ENCODE measurements at regions of chr7 and their contacts with region 1.

Region 1: GRCh38 chr7:101542527-101543241 is 86.4 kb downstream of the MYL10 start:
- DNase-seq: peak; percentile 83 to 90
- H3K4me3 ChIP-seq: no peak overlapping the region
- H3K4me3 Mint-ChIP-seq: no peak overlapping the region
- H3K27ac Mint-ChIP-seq: peak overlapping the region; percentile 81
- H3K4me1 ChIP-seq: 0 out of 2 replicates have a peak, but pooled peaks cover 3% of the 10 kb centered on the region
- H3K4me1 Mint-ChIP-seq: peaks cover 6% of the 10 kb centered on the region
- H3K27me3 ChIP-seq: no peaks in the 10 kb centered on the region
- H3K27me3 Mint-ChIP-seq: no peaks in the 10 kb centered on the region
- CTCF ChIP-seq: peak; percentile 86 to 96

Region 2: GRCh38 chr7:101602484-101603241 is 60.0 kb after region 1 on chr7:
- CTCF ChIA-PET with region 1: interaction called, 21 read pairs
- POLR2A ChIA-PET with region 1: no interaction called
- intact Hi-C with region 1: loop called (anchors 2 kb)
- DNase-seq: peak; percentile 85 to 90
- H3K4me3 ChIP-seq: no peak overlapping the region
- H3K4me3 Mint-ChIP-seq: no peak overlapping the region
- H3K27ac Mint-ChIP-seq: peak overlapping the region; percentile 86
- H3K4me1 ChIP-seq: peaks cover 35% of the 10 kb centered on the region
- H3K4me1 Mint-ChIP-seq: peaks cover 12% of the 10 kb centered on the region
- H3K27me3 ChIP-seq: no peaks in the 10 kb centered on the region
- H3K27me3 Mint-ChIP-seq: no peaks in the 10 kb centered on the region
- CTCF ChIP-seq: peak; percentile 86 to 94

Region 3: GRCh38 chr7:101743241-101743994 is 200.7 kb after region 1 on chr7:
- CTCF ChIA-PET with region 1: interaction called, 3 read pairs
- POLR2A ChIA-PET with region 1: no interaction called
- intact Hi-C with region 1: loop called (anchors 2 kb)
- DNase-seq: peak; percentile 66 to 73
- H3K4me3 ChIP-seq: peak overlapping the region; percentile 61
- H3K4me3 Mint-ChIP-seq: peak overlapping the region; percentile 81
- H3K27ac Mint-ChIP-seq: peak overlapping the region; percentile 21
- H3K4me1 ChIP-seq: peaks cover 20% of the 10 kb centered on the region
- H3K4me1 Mint-ChIP-seq: peaks cover 11% of the 10 kb centered on the region
- H3K27me3 ChIP-seq: no peaks in the 10 kb centered on the region
- H3K27me3 Mint-ChIP-seq: no peaks in the 10 kb centered on the region
- CTCF ChIP-seq: peak; percentile 30 to 52

Region 4: GRCh38 chr7:102236592-102237287 is 694.1 kb after region 1 on chr7:
- CTCF ChIA-PET with region 1: no interaction called
- POLR2A ChIA-PET with region 1: no interaction called
- intact Hi-C with region 1: loop called (anchors 2 kb)
- DNase-seq: peak; percentile 74 to 81
- H3K4me3 ChIP-seq: no peak overlapping the region
- H3K4me3 Mint-ChIP-seq: no peak overlapping the region
- H3K27ac Mint-ChIP-seq: no peak overlapping the region
- H3K4me1 ChIP-seq: no peaks in the 10 kb centered on the region; the same call in 1 of the 2 replicates
- H3K4me1 Mint-ChIP-seq: no peaks in the 10 kb centered on the region
- H3K27me3 ChIP-seq: no peaks in the 10 kb centered on the region
- H3K27me3 Mint-ChIP-seq: no peaks in the 10 kb centered on the region
- CTCF ChIP-seq: peak; percentile 82 to 88

Measured in Caco-2 (cell line).